Calu3 (cell line): ENCODE measurements at regions of chr1 and their contacts with region 1.

Region 1: DNA sequence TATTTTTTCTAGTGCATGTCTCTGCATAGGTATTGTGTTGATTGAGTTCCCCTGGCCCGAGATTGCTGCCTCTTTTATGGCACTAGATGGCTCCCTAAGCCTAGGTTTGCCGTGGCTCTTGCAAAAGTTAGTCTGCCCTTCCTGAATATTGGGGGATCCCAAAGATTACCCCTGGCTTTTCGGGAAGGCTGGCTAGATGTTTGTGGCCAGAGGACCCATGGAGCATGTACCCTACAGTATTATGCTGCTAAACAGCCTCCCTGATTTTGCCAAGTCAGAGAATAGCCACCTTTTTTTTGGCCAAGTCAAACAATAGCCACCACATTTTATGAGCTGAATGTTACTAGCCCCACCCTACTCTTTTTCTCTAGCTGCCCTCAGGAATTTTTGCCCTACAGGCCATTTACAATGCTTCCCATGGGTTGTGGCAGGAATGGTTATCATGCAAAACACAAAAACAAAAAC is 343.2 kb downstream of the OLFM3 start:
- DNase-seq: peak; percentile 28
- H3K4me3 Mint-ChIP-seq: no peak overlapping the region
- H3K27ac Mint-ChIP-seq: no peak overlapping the region
- H3K4me1 Mint-ChIP-seq: no peaks in the 10 kb centered on the region
- H3K27me3 Mint-ChIP-seq: no peaks in the 10 kb centered on the region
- CTCF ChIP-seq: no peak

Region 2: DNA sequence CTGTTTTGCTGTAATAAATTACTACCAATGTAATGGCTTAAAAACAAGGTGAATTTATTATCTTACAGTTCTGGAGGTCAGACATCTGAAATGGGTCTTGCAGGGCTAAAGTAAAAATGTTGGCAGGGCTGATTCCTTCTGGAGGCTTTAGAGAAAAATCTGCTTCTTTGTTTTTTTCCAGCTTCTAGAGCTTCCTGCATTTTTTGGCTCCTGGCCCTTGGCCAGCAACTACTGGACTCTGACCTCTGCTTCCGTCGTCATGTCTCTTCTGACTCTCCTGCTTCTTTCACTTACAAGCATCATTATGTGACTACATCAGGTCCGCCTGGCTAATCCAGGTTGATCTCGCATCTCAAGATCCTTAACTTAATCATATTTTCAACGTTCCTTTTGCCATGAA is 65.8 kb before region 1 on chr1:
- CTCF ChIA-PET with region 1: interaction called, 3 read pairs
- intact Hi-C with region 1: loop called (anchors 2 kb)
- DNase-seq: peak; percentile 54
- H3K4me3 Mint-ChIP-seq: no peak overlapping the region
- H3K27ac Mint-ChIP-seq: no peak overlapping the region
- H3K4me1 Mint-ChIP-seq: no peaks in the 10 kb centered on the region
- H3K27me3 Mint-ChIP-seq: no peaks in the 10 kb centered on the region
- CTCF ChIP-seq: no peak

Region 3: DNA sequence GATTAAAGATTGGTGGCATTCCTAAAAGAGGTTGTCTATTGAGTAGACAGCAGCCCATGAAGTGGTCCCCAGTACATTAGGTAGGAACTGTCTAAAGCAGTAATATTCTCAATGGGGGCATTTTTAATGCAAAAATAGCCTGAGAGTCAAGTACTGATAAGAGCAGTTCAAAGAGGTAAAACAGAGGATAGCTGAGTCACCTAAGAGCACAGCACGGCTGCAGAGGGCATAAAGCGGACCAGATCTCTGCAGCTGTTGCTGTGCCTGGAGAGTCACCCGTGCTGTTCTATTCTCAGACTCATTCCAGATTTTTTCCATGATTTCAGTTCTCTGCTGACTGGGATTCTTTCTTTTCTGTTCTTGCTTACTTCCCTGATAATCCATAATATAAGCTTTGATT is 30.0 kb after region 1 on chr1:
- CTCF ChIA-PET with region 1: no interaction called
- intact Hi-C with region 1: no loop called
- DNase-seq: no peak
- H3K4me3 Mint-ChIP-seq: no peak overlapping the region
- H3K27ac Mint-ChIP-seq: no peak overlapping the region
- H3K4me1 Mint-ChIP-seq: no peaks in the 10 kb centered on the region
- H3K27me3 Mint-ChIP-seq: no peaks in the 10 kb centered on the region
- CTCF ChIP-seq: no peak

Region 4: DNA sequence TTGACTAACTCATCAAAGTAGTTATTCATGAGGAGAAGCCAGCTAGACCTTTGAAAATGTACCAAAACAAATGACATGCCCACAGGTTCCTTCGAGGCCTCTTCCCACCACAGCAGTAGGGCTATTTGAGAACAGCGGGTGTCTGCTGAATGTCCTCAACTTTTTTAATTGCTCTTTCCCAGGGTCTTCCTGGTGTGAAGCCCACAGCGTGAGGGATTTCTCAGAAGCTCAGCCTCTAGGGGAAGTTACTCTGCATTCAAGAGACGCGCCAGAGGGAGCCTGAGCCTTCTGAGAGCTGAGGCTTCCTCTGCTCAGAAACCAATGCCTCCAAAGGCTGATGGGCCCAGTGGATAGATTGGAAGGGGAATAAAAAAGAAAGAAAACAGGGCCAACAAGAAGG is 189.6 kb after region 1 on chr1:
- CTCF ChIA-PET with region 1: no interaction called
- intact Hi-C with region 1: no loop called
- DNase-seq: no peak
- H3K4me3 Mint-ChIP-seq: no peak overlapping the region
- H3K27ac Mint-ChIP-seq: no peak overlapping the region
- H3K4me1 Mint-ChIP-seq: no peaks in the 10 kb centered on the region
- H3K27me3 Mint-ChIP-seq: no peaks in the 10 kb centered on the region
- CTCF ChIP-seq: no peak

Region 5: DNA sequence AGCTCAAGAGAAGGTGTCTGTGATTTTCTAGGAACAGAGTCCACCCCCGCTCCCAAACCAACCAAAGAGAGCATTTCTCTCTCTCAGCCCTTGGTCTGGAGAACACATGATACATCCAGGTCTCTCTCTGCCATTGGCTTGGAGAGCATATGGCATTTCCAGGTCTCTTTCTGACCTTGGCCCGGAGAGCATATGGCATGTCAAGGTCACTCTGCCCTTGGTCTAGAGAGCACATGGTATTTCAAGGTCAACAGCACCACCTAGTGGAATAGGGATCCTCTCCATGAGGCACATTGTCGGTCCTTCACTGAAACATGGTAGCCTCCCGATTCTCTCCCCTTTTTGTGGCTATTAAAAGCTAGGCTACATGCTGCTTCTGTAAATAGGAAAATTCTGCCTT is 780.9 kb after region 1 on chr1:
- CTCF ChIA-PET with region 1: no interaction called
- intact Hi-C with region 1: loop called (anchors 10 kb)
- DNase-seq: no peak
- H3K4me3 Mint-ChIP-seq: no peak overlapping the region
- H3K27ac Mint-ChIP-seq: no peak overlapping the region
- H3K4me1 Mint-ChIP-seq: no peaks in the 10 kb centered on the region
- H3K27me3 Mint-ChIP-seq: no peaks in the 10 kb centered on the region
- CTCF ChIP-seq: no peak

Region 6: DNA sequence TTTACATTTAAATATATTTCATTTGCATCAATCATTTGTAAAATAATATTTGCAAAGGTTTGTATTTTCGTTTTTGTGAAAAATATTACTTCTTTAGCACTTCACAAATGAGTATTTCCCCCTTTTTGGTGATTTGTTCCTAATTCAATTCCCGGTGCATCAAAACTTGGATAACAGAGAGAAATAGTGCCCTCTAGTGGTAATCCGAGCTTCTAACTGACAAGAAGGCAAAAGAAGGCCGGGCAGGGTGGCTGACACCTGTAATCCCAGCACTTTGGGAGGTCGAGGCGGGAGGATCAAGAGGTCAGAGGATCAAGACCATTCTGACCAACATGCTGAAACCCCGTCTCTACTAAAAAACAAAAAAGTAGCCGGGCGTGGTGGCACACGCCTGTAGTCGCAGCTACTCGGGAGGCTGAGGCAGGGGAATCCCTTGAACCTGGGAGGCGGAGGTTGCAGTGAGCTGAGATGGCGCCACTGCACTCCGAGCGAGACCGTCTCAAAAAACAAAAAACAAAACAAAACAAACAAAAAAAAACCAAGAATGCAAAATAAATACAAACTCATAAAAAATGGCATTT is 1317.1 kb after region 1 on chr1:
- CTCF ChIA-PET with region 1: interaction called, 5 read pairs
- intact Hi-C with region 1: loop called (anchors 10 kb)
- DNase-seq: peak; percentile 18
- H3K4me3 Mint-ChIP-seq: no peak overlapping the region
- H3K27ac Mint-ChIP-seq: no peak overlapping the region
- H3K4me1 Mint-ChIP-seq: no peaks in the 10 kb centered on the region
- H3K27me3 Mint-ChIP-seq: no peaks in the 10 kb centered on the region
- CTCF ChIP-seq: no peak